WTC11 (cell line): ENCODE measurements at regions of chr20 and their contacts with region 1.

Region 1: DNA sequence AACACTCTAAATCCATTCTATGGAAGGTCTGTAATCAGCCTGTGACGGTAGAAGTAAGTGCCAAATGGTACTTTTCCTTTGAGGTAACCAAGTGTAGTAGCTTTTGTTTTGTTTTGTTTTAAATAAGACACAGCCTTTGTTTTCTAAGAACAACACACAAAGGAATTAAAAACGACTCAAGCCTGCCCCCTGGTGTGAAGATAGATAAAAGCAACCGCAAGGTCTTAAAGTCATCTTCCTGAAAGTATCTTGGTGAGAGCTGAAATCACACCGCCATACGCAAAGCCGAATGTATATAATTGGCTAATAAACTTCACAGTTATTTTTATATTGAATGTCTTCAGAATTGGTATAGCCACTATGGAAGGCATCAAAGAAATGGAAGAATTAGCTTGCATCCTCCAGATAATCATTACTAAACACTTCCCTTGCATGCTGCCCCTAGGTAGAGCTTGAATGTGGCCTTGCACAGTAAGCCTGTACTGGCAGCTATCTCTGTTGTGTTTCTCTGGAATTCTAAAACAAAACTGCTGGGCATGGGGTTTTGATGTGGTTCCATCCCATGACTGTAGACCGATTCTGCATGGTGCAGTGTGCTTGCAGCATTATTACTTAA is 95.6 kb downstream of the LAMP5 start:
- DNase-seq: peak; percentile 76
- ATAC-seq: peak; percentile 66
- H3K4me3 Mint-ChIP-seq: no peak overlapping the region
- H3K27ac Mint-ChIP-seq: no peak overlapping the region
- H3K4me1 Mint-ChIP-seq: peaks cover 10% of the 10 kb centered on the region
- H3K27me3 Mint-ChIP-seq: peaks cover 2% of the 10 kb centered on the region
- CTCF ChIP-seq: peak; percentile 61

Region 2: GRCh38 chr20:9407805-9408421 is 202.1 kb before region 1 on chr20:
- CTCF ChIA-PET with region 1: interaction called, 102 read pairs
- POLR2A ChIA-PET with region 1: interaction called, 4 read pairs
- DNase-seq: peak; percentile 73
- ATAC-seq: peak; percentile 91
- H3K4me3 Mint-ChIP-seq: no peak overlapping the region
- H3K27ac Mint-ChIP-seq: no peak overlapping the region
- H3K4me1 Mint-ChIP-seq: no peaks in the 10 kb centered on the region
- H3K27me3 Mint-ChIP-seq: no peaks in the 10 kb centered on the region
- CTCF ChIP-seq: peak; percentile 76

Region 3: DNA sequence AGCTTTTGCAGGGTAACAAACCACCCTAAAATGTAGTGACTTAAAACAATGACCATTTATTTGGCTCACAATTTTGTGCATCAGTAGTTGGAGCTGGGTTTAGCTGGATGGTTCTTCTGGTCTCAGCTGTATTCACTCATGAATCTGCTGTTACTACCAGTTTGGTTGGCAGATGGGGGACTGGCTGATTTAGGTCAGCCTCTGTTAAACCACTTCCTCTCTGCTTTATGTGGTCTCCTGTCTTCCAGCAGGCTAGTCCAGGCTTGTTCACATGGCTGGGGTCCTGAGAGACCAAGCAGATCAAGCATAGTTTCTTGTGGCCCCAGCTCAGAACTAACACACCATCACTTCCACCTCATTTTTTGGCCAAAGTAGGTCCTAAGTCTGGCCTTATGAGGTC is 162.8 kb before region 1 on chr20:
- CTCF ChIA-PET with region 1: interaction called, 10 read pairs
- POLR2A ChIA-PET with region 1: no interaction called
- DNase-seq: no peak
- ATAC-seq: no peak
- H3K4me3 Mint-ChIP-seq: no peak overlapping the region
- H3K27ac Mint-ChIP-seq: no peak overlapping the region
- H3K4me1 Mint-ChIP-seq: peaks cover 13% of the 10 kb centered on the region
- H3K27me3 Mint-ChIP-seq: no peaks in the 10 kb centered on the region
- CTCF ChIP-seq: no peak

Region 4: GRCh38 chr20:9458138-9458796 is 151.7 kb before region 1 on chr20:
- CTCF ChIA-PET with region 1: interaction called, 30 read pairs
- POLR2A ChIA-PET with region 1: no interaction called
- DNase-seq: peak; percentile 47
- ATAC-seq: peak; percentile 96
- H3K4me3 Mint-ChIP-seq: no peak overlapping the region
- H3K27ac Mint-ChIP-seq: no peak overlapping the region
- H3K4me1 Mint-ChIP-seq: no peaks in the 10 kb centered on the region
- H3K27me3 Mint-ChIP-seq: no peaks in the 10 kb centered on the region
- CTCF ChIP-seq: no peak; the same call in 1 of the 2 replicates

Region 5: GRCh38 chr20:9467995-9468394 is 142.0 kb before region 1 on chr20:
- CTCF ChIA-PET with region 1: interaction called, 62 read pairs
- POLR2A ChIA-PET with region 1: interaction called, 3 read pairs
- DNase-seq: peak; percentile 40
- ATAC-seq: peak; percentile 74
- H3K4me3 Mint-ChIP-seq: no peak overlapping the region
- H3K27ac Mint-ChIP-seq: no peak overlapping the region
- H3K4me1 Mint-ChIP-seq: no peaks in the 10 kb centered on the region
- H3K27me3 Mint-ChIP-seq: no peaks in the 10 kb centered on the region
- CTCF ChIP-seq: peak; percentile 66

Region 6: DNA sequence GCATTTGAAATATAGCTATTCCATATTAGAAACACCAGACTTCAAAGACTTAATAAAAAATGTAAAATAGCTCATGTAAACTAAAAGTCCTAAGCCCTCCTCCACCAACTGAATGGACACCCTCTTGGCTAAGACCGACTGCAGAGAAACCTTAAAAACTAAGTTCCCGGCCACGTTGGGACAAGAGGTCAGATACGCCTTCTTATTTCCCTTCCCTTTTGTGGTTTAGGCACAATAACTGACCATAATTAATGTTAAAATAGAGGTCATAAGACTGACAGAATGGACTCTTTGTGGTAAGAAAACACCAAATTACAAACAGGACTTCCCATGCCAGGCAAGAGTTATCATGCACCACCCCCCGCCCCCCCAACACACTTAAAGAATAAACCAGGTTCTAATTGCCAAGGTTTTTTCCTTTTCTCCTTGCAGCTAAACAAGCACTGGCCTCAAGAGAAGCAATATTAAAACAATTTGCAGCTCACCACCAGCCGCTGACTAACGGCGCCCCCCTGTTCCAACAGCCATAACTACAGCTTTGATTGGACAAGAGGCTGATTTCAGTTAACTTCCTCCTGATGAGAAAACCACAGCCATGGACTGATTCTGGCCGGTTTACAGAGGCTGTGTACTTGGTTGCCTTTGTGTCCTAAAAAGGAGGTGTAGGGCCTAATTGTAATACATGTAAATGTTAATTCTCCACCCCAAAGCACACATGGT is 106.3 kb before region 1 on chr20:
- CTCF ChIA-PET with region 1: interaction called, 10 read pairs
- POLR2A ChIA-PET with region 1: no interaction called
- DNase-seq: peak; percentile 44
- ATAC-seq: no peak; the same call in 1 of the 2 replicates
- H3K4me3 Mint-ChIP-seq: no peak overlapping the region
- H3K27ac Mint-ChIP-seq: no peak overlapping the region
- H3K4me1 Mint-ChIP-seq: peaks cover 26% of the 10 kb centered on the region
- H3K27me3 Mint-ChIP-seq: peaks cover 64% of the 10 kb centered on the region
- CTCF ChIP-seq: no peak

Region 7: GRCh38 chr20:9514461-9515213 is 95.4 kb before region 1 on chr20 and contains the start of gene LAMP5:
- CTCF ChIA-PET with region 1: interaction called, 48 read pairs
- POLR2A ChIA-PET with region 1: no interaction called
- DNase-seq: peak; percentile 82
- ATAC-seq: peak; percentile 74
- H3K4me3 Mint-ChIP-seq: peak within 1 kb of the TSS; percentile 79
- H3K27ac Mint-ChIP-seq: no peak within 1 kb of the TSS
- H3K4me1 Mint-ChIP-seq: peaks cover 50% of the 10 kb centered on the region
- H3K27me3 Mint-ChIP-seq: peaks cover 100% of the 10 kb centered on the region
- CTCF ChIP-seq: no peak
- total RNA-seq, gene LAMP5: 0.11 to 0.37 TPM (median 0.31 TPM) in 3 replicates